Psoas muscle (tissue), 8 donors: ENCODE measurements at regions of chr7 and their contacts with region 1.

Region 1: DNA sequence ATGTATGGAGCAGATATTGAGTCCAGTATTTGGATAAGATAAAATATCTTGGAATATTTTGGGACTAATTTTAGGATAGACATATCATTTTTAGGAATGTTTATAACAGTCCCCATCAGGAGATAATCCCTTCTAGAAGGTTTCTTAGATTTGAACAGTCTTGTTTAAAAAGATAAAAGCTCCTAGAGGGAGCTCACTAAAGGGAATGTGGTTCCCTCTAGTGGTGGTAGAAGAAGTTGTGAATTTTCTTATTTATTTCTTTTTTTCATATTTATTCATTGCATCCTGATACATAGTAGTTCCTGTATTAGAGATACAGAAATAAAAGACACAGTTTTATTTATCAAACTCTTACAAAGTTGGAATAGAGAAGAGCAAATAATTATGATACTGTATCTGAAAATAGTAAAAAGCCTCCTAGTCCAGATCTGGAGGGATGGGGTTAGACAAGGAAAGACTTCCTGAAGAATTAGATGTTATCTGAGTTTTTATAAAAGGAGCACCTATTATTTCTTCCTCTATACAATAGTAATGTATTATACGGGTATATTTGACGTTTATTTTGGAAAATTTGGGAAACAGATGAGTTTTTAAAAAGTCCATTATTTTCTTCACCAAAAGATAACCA is 24.5 kb upstream of the KLF14 start:
- DNase-seq: no peak
- ATAC-seq: peak in 3 of 4 donors; percentile 33 to 47 (median 41)
- H3K4me3 ChIP-seq: no peak overlapping the region
- H3K27ac ChIP-seq: no peak overlapping the region
- H3K4me1 ChIP-seq: no peaks in the 10 kb centered on the region
- H3K27me3 ChIP-seq: peaks cover 0 to 1% (median 0%) of the 10 kb centered on the region in 3 donors
- CTCF ChIP-seq: peak; percentile 69

Region 2: DNA sequence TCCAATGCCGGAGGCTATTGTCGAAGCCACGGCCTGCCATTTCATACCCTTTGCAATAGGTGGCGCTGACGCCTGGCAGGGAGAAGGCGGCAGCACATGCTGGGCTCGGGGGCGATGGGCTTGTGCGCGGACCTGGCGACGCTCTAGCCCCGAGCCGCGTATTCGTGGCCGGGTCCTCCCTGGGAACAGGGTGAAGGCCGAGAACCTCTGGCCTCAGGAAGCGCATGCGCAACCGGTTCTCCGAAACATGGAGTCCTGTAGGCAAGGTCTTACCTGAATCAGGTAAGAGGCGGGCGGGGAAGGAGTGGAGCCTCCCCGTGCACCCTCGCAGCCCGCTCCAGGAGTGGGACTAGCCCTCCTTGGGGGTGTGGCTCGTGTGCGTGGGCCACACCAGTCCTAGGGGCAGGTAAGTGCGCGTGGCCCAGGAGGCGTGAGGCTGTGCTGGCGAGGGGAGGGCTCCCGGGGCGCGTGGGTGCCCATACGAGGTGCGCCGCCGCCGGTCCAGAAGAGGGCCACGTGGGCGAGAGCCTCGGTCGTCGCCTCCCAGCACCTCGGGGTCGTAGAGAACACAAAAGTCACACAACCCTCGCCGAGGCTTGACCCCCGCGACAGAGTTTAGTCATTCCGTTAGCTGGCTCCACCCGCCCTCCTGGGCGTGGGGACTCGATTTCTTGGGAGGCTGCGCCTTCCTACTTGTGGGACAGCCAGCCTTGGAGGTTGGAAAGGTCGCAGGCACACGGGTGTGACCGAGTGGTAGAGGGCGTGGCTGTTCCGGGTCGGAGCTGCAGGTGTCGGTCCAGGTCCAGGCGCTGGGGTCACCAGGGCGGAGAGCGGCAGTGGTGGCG is 272.2 kb before region 1 on chr7:
- intact Hi-C with region 1: loop called in 1 of 2 experiments (anchors 10 kb)
- DNase-seq: peak; percentile 56 to 61
- ATAC-seq: peak in 2 of 4 donors; percentile 45 to 54
- H3K4me3 ChIP-seq: peak overlapping the region; percentile 57
- H3K27ac ChIP-seq: no peak overlapping the region
- H3K4me1 ChIP-seq: no peaks in the 10 kb centered on the region
- H3K27me3 ChIP-seq: peaks cover 0 to 26% (median 12%) of the 10 kb centered on the region in 3 donors
- CTCF ChIP-seq: peak; percentile 33